Left colon (tissue), 2 donors: ENCODE measurements at regions of chr9 and their contacts with region 1.

Region 1: GRCh38 chr9:3525836-3526164 is at the start of gene RFX3:
- DNase-seq: peak; percentile 91 to 93
- ATAC-seq: peak; percentile 88
- total RNA-seq, gene RFX3: 8.4 to 10.6 TPM

Region 2: GRCh38 chr9:4086119-4087090 is 560.6 kb after region 1 on chr9:
- intact Hi-C with region 1: no loop called
- DNase-seq: no peak
- ATAC-seq: peak; percentile 54

Region 3: GRCh38 chr9:4297151-4297785 is 771.5 kb after region 1 on chr9:
- intact Hi-C with region 1: loop called in 1 of 2 experiments (anchors 10 kb)
- DNase-seq: peak; percentile 82 to 86
- ATAC-seq: peak; percentile 63